ENCODE measurements at regions of chr4 and their contacts with region 1.

Region 1: GRCh38 chr4:70839589-70840093 is at the start of gene GRSF1:
- DNase-seq: peak; percentile 96 to 98 (median 97)
- H3K4me3 ChIP-seq: peak within 1 kb of the TSS; percentile 54 to 98 (median 81)
- H3K27ac ChIP-seq: peak within 1 kb of the TSS; percentile 89 to 98 (median 95)
- H3K4me1 ChIP-seq: peaks cover 6 to 30% of the 10 kb centered on the region in 2 donors
- H3K27me3 ChIP-seq: no peaks in the 10 kb centered on the region
- CTCF ChIP-seq: peak in 2 of 6 experiments; percentile 2 to 23
- POLR2A ChIP-seq: peak in 1 of 2 donors; percentile 86
- total RNA-seq, gene GRSF1: 64.1 to 109 (median 95.5) TPM

Region 2: GRCh38 chr4:70687821-70688794 is 151.5 kb before region 1 on chr4 and contains the start of gene UTP3:
- intact Hi-C with region 1: loop called in 1 of 2 experiments (anchors 10 kb)
- DNase-seq: peak; percentile 96 to 98 (median 96)
- H3K4me3 ChIP-seq: peak within 1 kb of the TSS; percentile 48 to 96 (median 54)
- H3K27ac ChIP-seq: peak within 1 kb of the TSS; percentile 85 to 97 (median 89)
- H3K4me1 ChIP-seq: peaks cover 21 to 33% of the 10 kb centered on the region in 2 donors
- H3K27me3 ChIP-seq: no peaks in the 10 kb centered on the region
- CTCF ChIP-seq: peak; percentile 87 to 96 (median 94)
- POLR2A ChIP-seq: peak; percentile 60 to 79
- total RNA-seq, gene UTP3: 14.9 to 39.3 (median 23.1) TPM

Region 3: GRCh38 chr4:70895811-70896491 is 56.3 kb after region 1 on chr4:
- intact Hi-C with region 1: loop called (anchors 10 kb)
- DNase-seq: no peak
- H3K4me3 ChIP-seq: no peak overlapping the region
- H3K27ac ChIP-seq: no peak overlapping the region
- H3K4me1 ChIP-seq: peaks cover 0 to 9% of the 10 kb centered on the region in 2 donors
- H3K27me3 ChIP-seq: no peaks in the 10 kb centered on the region
- CTCF ChIP-seq: no peak
- POLR2A ChIP-seq: no peak

Region 4: DNA sequence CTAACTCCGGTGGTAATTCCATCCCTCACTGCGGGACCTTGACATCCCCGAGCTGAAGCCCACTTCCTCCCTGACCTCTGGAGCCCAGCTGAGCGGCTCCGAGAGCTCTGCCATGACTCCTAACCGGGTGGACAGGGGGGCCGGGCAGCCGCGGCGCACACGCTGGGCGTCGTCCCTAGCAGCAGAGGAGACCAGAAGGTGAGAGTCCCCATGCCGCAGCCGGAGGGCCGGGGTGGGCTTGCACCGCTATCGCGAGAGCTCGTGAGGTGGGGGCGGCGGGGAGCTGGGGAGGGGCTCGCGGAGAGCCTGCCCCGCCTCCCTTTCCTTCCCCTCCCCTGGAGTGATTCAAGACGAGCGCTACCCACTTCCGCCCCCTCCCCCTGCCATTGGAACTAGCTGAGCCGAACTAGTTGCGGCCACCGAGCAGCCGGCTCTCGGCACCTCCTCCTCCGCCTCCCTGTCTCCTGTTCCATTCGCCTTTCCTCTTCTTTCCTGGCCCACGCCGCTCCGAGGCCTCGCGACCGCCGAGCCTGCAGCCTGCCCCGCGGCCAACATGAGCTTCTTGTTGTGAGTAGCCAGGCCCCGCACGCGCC is 62.4 kb after region 1 on chr4 and contains the start of gene MOB1B:
- intact Hi-C with region 1: loop called (anchors 10 kb)
- DNase-seq: peak; percentile 83 to 92 (median 88)
- H3K4me3 ChIP-seq: peak within 1 kb of the TSS; percentile 68 to 99 (median 89)
- H3K27ac ChIP-seq: peak within 1 kb of the TSS; percentile 47 to 90 (median 85)
- H3K4me1 ChIP-seq: peaks cover 0 to 9% of the 10 kb centered on the region in 2 donors
- H3K27me3 ChIP-seq: no peaks in the 10 kb centered on the region
- CTCF ChIP-seq: peak in 5 of 6 experiments; percentile 30 to 53 (median 43)
- POLR2A ChIP-seq: peak in 1 of 2 donors; percentile 73
- total RNA-seq, gene MOB1B: 5.8 to 25.4 (median 16.2) TPM

Region 5: GRCh38 chr4:70993181-70994068 is 153.8 kb after region 1 on chr4 and contains the start of gene DCK:
- intact Hi-C with region 1: loop called (anchors 10 kb)
- DNase-seq: peak; percentile 89 to 93 (median 91)
- H3K4me3 ChIP-seq: peak within 1 kb of the TSS; percentile 48 to 75 (median 69)
- H3K27ac ChIP-seq: peak within 1 kb of the TSS in 4 of 5 donors; percentile 75 to 92 (median 80)
- H3K4me1 ChIP-seq: peaks cover 7 to 40% of the 10 kb centered on the region in 2 donors
- H3K27me3 ChIP-seq: no peaks in the 10 kb centered on the region
- CTCF ChIP-seq: peak in 1 of 6 experiments; percentile 1
- POLR2A ChIP-seq: peak; percentile 75 to 82
- total RNA-seq, gene DCK: 9.8 to 21.0 (median 11.8) TPM

Measured in adrenal gland (tissue), 19 donors.